ENCODE measurements at regions of chr19 and their contacts with region 1.

Region 1: GRCh38 chr19:32976208-32976805 is 4.3 kb downstream of the FAAP24 start:
- DNase-seq: peak; percentile 86
- ATAC-seq: no peak
- H3K4me3 Mint-ChIP-seq: no peak overlapping the region
- H3K27ac Mint-ChIP-seq: no peak overlapping the region
- H3K4me1 Mint-ChIP-seq: peaks cover 11% of the 10 kb centered on the region
- H3K27me3 Mint-ChIP-seq: no peaks in the 10 kb centered on the region

Region 2: DNA sequence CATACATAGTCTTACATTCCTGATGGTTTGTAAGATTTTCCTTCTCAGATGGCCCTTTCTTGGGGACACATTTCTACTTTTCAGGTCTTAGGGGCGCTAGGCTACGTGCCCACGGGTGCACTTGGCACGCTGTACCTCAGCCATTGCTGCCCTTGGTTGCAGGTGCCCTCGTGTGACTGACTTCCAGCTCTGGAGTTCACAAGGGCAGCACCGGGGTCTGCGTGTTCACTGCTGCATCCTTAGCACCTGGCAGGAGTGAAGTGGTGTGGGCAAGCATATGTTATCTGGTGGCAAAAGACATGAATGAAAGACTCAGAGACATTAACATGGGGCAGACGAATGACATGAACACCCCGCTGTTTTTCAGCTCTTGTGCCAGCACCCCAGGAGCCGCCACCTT is 142.3 kb after region 1 on chr19:
- CTCF ChIA-PET with region 1: interaction called, 15 read pairs
- POLR2A ChIA-PET with region 1: interaction called, 3 read pairs
- DNase-seq: no peak
- ATAC-seq: no peak
- H3K4me3 Mint-ChIP-seq: no peak overlapping the region
- H3K27ac Mint-ChIP-seq: no peak overlapping the region
- H3K4me1 Mint-ChIP-seq: no peaks in the 10 kb centered on the region
- H3K27me3 Mint-ChIP-seq: no peaks in the 10 kb centered on the region

Region 3: DNA sequence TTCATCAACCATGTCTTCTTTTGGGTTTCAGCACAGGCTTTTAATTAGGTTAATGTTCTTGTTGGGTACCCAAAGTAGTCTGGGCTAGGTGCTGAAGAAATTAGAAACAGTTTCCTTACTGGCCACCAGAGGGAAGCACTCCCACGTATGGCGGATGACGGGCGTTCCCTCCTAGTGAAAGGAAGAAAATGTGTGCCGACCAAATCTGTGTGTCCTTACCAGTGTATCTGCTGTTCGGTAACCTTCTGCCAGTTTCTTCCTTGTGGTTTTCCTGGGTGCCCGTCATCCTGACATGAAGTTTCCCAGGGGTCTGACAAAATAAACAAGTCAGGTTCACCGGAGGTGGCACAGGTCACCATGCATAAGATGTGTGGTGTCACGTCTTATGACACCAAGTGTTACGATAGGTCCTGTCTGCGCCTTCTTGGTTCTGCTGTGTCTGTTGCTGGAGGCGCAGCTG is 149.7 kb after region 1 on chr19:
- CTCF ChIA-PET with region 1: interaction called, 10 read pairs
- POLR2A ChIA-PET with region 1: interaction called, 3 read pairs
- DNase-seq: peak; percentile 74
- ATAC-seq: peak; percentile 88
- H3K4me3 Mint-ChIP-seq: no peak overlapping the region
- H3K27ac Mint-ChIP-seq: no peak overlapping the region
- H3K4me1 Mint-ChIP-seq: peaks cover 13% of the 10 kb centered on the region
- H3K27me3 Mint-ChIP-seq: no peaks in the 10 kb centered on the region

Measured in activated CD8-positive, alpha-beta T cell treated with anti-CD3 and anti-CD28 coated beads, Interleukin-2, amount 10 ng/mL, durations not matched to agents 7 days and 5 days (primary cell).